CD8-positive, alpha-beta memory T cell (primary cell): ENCODE measurements at regions of chr14 and their contacts with region 1.

Region 1: DNA sequence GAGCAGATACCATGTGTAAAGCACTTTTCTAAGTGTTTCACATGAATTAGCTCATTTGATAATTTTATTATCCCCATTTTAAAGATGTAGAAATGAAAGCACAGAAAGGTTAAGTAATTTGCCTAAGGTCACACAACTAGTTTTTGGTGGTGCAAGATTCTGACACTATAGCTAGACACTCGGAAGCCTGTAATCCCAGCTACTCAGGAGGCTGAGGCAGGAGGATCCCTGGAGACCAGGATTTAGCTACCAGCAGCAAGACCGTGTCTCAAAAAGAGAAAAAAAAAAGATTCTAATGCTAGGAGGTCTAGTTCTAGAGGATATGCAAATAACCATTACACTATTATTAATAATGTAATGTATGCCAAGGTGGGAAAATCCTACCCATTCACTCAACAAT is 5.1 kb upstream of the HNRNPC start:
- DNase-seq: no peak
- H3K4me3 ChIP-seq: no peak overlapping the region
- H3K4me3 Mint-ChIP-seq: no peak overlapping the region
- H3K27ac ChIP-seq: no peak overlapping the region
- H3K27ac Mint-ChIP-seq: peak overlapping the region in 1 of 8 donors; percentile 50
- H3K4me1 ChIP-seq: peaks cover 6% of the 10 kb centered on the region
- H3K4me1 Mint-ChIP-seq: peaks cover 9 to 11% (median 10%) of the 10 kb centered on the region in 3 donors
- H3K27me3 ChIP-seq: no peaks in the 10 kb centered on the region
- H3K27me3 Mint-ChIP-seq: peaks cover 0 to 2% of the 10 kb centered on the region in 2 donors

Region 2: DNA sequence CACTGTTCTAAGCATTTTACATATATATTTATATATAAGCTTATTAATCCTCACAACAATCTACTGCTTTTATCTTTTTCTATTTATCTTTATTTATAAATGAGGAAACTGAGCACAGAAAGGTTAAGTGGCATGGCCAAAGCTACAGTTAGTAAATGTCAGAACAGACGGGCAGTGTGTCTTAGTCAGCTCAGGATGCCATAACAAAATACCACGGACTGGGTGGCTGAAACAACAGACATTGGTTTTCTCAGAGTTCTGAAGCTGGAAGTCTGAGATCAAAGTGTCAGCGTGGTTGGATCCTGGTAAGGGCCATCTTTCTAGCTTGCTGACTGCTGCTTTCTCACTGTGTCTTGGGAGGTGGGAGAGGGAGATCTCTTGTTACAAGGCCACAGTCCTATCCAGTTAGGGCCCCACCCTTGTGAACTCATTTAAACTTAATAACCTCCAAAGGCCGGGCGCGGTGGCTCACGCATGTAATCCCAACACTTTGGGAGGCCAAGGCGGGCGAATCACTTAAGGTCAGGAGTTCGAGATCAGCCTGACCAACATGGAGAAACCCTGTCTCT is 25.3 kb after region 1 on chr14:
- CTCF ChIA-PET with region 1: no interaction called
- POLR2A ChIA-PET with region 1: interaction called, 11 read pairs
- DNase-seq: no peak
- H3K4me3 ChIP-seq: no peak overlapping the region
- H3K4me3 Mint-ChIP-seq: no peak overlapping the region
- H3K27ac ChIP-seq: no peak overlapping the region
- H3K27ac Mint-ChIP-seq: no peak overlapping the region
- H3K4me1 ChIP-seq: no peaks in the 10 kb centered on the region
- H3K4me1 Mint-ChIP-seq: peaks cover 2 to 11% (median 4%) of the 10 kb centered on the region in 3 donors
- H3K27me3 ChIP-seq: peaks cover 5% of the 10 kb centered on the region
- H3K27me3 Mint-ChIP-seq: peaks cover 17% of the 10 kb centered on the region in 2 donors